ENCODE measurements at regions of chr12 and their contacts with region 1.

Region 1: DNA sequence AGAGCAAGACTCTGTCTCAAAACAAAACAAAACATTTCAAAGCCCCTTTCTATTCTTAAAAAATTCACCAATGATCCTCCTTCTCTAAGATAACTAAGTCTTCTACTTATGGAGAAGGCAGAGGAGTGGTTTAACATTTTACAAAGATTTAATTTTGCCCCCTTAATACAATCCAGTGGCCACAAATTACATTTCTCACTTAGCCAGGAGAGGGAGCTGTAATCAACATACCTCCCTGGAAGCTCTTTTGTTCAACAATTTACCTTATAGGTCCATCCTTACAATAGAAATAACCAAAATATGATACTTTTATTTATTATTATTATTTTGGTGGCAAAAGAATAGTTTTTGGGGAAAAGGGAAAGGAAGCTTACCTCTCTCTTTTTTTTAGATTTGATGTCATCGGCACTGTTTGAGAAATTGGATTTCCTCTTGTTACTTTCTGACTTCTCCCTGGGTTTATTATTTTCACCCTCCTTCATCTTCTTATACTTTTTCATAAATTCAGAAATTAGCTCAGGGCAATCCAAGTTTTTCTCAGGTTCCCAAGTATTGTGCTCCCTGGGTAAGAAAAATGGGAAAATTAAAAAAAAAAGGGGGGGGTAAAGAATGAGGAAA is 28.1 kb downstream of the CBX5 start:
- DNase-seq: no peak
- ATAC-seq: peak; percentile 57; the same call in 1 of the 2 replicates
- H3K4me3 ChIP-seq: no peak overlapping the region
- H3K27ac ChIP-seq: peak overlapping the region; percentile 73
- H3K4me1 ChIP-seq: peaks cover 17% of the 10 kb centered on the region
- H3K27me3 ChIP-seq: no peaks in the 10 kb centered on the region
- CTCF ChIP-seq: no peak; the same call in 1 of the 2 replicates

Region 2: GRCh38 chr12:54273981-54274380 is 22.2 kb after region 1 on chr12:
- CTCF ChIA-PET with region 1: interaction called, 22 read pairs
- POLR2A ChIA-PET with region 1: no interaction called
- in situ Hi-C with region 1: no loop called
- intact Hi-C with region 1: no loop called
- DNase-seq: no peak
- ATAC-seq: no peak
- H3K4me3 ChIP-seq: no peak overlapping the region
- H3K27ac ChIP-seq: peak overlapping the region; percentile 35; the same call in 1 of the 2 replicates
- H3K4me1 ChIP-seq: peaks cover 25% of the 10 kb centered on the region
- H3K27me3 ChIP-seq: no peaks in the 10 kb centered on the region
- CTCF ChIP-seq: no peak

Region 3: DNA sequence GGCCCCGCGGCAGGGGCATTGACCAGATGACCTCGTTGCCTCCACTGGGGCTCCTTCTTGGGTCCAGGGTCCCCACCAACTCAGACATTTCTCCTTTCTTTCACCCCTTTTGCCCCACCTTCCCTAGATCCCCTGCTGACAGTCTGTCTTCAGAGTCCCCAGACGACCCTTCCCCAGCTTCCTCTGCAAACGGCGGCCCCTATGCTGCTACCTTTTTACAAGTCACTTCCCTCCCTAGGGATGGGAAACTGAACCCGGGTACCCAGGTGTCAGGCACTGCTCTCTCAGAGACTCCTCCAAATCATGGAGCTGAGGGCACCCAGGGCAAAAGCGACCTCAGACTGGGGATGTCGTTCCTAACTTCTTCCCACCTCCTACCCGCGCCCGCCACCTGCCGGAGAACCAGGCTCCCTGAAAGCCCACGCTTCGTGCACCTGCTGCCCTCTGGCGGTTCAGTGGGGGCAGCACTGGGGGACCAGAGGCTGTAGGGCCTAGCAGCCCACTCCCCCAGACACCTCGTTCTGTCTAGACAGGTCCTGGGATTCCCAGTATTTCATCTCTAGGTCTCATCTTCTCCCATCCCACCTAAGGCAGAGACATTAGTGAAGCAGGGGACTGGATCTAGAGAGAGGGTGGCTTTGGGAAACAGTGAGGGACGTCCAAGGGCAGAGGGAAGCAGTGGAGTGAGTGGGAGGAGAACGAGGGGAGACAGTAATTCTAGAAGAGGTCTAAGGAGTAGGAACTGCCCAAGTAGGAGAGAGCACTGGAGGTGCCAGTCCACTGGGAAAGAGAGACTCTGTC is 127.8 kb after region 1 on chr12:
- CTCF ChIA-PET with region 1: interaction called, 10 read pairs
- POLR2A ChIA-PET with region 1: interaction called, 9 read pairs
- in situ Hi-C with region 1: no loop called
- intact Hi-C with region 1: no loop called
- DNase-seq: peak; percentile 73
- ATAC-seq: peak; percentile 93
- H3K4me3 ChIP-seq: peak overlapping the region; percentile 44 to 64
- H3K27ac ChIP-seq: peak overlapping the region; percentile 64; the same call in 1 of the 2 replicates
- H3K4me1 ChIP-seq: peaks cover 2% of the 10 kb centered on the region; the same call in 1 of the 2 replicates
- H3K27me3 ChIP-seq: no peaks in the 10 kb centered on the region
- CTCF ChIP-seq: peak; percentile 100